ENCODE measurements at regions of chr10 and their contacts with region 1.

Region 1: DNA sequence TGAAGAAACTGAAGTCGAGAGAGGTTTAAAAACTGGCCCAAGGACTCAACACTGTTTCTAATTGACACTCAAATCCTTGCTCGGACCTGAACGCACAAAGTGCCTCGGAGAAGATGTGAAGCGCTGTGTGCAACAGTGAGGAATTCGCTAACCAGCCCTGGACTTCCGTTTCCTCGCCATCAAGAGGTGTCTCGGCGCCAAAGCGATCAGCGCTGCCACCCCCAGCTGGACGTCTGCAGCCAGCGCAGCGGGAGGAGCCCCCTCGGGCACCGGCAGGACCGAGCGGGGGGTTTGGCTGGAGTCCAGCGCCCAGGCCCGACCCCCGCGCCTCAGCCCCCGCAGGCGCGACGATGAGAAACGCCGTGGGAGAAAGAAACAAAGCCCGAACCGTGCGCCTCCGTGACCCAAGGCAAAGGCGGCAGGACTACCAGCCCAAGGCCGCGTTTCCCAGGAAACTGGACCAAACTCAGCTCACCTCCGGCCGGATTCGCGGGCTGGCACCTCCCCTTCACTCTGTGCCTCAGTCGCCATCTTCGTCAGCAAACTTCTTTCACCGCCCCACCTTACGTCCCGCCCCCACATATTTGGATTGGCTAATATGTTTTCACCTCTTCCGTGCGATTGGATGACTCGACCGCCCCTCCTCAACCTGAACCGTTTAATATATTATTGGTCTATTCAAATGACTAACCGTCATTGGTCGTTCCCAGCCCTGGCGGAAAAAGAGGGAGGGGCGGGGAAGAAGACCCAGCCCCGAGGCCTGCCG is at the start of gene ARHGAP19:
- DNase-seq: peak; percentile 93 to 96 (median 94)
- ATAC-seq: peak; percentile 95
- H3K4me3 ChIP-seq: peak within 1 kb of the TSS; percentile 78
- H3K27ac ChIP-seq: peak within 1 kb of the TSS; percentile 89
- H3K4me1 ChIP-seq: peaks cover 8 to 18% of the 10 kb centered on the region in 2 experiments; a peak in 4 of 5 replicates
- H3K27me3 ChIP-seq: no peaks in the 10 kb centered on the region
- CTCF ChIP-seq: peak in 1 of 3 experiments; percentile 19; a peak in 1 of 6 replicates
- EP300 ChIP-seq: 0 out of 2 replicates have a peak, but pooled peaks have one; percentile 16
- POLR2A ChIP-seq: peak; percentile 83
- RAD21 ChIP-seq: no peak
- polyA plus RNA-seq, gene ARHGAP19: 14.8 to 27.4 TPM

Region 2: DNA sequence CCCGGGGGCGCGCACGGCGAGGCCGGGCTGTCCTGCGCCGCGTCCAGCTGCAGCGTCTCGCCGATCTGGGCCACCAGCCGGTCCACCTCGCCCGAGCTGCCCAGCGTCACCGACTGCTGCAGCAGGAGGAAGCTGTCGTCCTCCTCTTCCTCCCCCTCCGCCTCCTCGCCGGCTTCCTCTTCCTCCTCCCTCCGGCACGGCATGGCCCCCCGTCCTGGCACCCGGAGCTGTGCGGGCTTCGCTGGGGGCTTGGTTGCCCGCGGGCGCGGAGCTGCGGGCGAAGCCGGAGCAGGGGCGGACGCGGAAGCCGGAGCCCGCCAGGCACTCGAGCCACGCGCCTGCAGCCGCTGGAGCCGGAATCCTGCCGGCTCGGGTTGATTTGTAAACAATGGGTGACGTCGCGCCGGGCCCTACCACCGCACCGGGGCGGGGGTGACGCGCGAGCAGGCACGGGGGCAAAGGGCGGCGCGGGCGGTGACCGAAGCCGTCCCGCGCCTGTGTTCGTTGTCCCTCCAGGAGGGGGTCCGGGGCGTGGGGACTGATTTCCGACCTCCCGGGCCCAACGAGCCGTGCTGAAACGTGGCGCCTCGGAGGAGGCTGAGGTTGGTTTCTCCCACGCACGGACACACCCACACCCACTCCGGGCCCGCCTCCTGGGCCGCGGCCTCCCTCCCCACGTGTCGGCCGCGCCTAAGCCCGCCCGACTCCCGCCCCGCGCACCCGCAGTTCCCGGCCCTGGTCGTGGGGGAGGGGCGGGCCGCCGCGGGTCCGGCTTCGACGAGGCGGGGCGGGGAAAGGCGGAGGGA is 42.3 kb after region 1 on chr10 and contains the start of gene FRAT2:
- CTCF ChIA-PET with region 1: no interaction called
- POLR2A ChIA-PET with region 1: interaction called, 6 read pairs
- in situ Hi-C with region 1: no loop called
- intact Hi-C with region 1: loop called (anchors 5 kb)
- DNase-seq: peak; percentile 90 to 94 (median 92)
- ATAC-seq: peak; percentile 87
- H3K4me3 ChIP-seq: peak within 1 kb of the TSS; percentile 73
- H3K27ac ChIP-seq: peak within 1 kb of the TSS; percentile 98
- H3K4me1 ChIP-seq: peaks cover 14 to 32% of the 10 kb centered on the region in 2 experiments
- H3K27me3 ChIP-seq: no peaks in the 10 kb centered on the region
- CTCF ChIP-seq: no peak
- EP300 ChIP-seq: no peak
- POLR2A ChIP-seq: peak; percentile 71
- RAD21 ChIP-seq: no peak
- polyA plus RNA-seq, gene FRAT2: 4.3 to 5.3 TPM